ENCODE measurements at regions of chr1 and their contacts with region 1.

Region 1: DNA sequence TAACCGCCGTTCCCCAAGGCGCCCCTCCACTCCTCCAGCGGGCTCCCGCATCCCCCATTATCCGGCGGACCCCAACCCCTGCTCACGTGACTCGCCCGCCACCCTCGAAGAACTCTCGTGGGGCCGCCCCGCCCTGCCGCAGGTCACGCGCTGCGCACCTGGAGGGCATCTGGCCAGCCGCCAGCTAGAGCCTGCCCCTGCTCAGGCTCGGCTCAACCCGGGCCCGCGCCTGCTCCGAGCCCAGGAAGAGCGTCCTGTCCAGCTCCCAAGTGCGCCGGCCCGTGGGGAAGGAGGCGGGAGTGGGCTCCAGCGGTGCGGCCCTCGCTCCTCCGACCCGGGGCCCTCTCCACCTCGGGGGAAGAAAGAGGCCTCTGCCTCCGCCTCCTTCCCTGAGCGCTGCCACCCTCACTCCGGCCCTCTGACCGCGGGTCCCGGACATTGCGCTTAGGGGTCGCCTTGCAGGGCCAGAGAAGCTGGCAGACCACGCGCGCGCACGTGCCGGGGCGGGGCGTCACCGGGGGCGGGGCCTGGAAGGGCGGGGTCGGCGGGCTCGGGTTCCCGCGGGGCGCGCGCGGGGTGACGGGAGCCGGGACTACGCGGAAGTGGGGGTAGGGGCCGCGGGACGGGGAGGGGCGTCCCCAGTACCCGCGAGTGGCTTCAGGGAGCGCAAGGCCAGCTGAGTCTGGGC is 28.4 kb downstream of the HMGN2 start:
- DNase-seq: no peak
- H3K4me3 Mint-ChIP-seq: peak overlapping the region; percentile 87
- H3K27ac Mint-ChIP-seq: peak overlapping the region; percentile 93
- H3K4me1 Mint-ChIP-seq: peaks cover 28% of the 10 kb centered on the region
- H3K27me3 Mint-ChIP-seq: no peaks in the 10 kb centered on the region

Region 2: DNA sequence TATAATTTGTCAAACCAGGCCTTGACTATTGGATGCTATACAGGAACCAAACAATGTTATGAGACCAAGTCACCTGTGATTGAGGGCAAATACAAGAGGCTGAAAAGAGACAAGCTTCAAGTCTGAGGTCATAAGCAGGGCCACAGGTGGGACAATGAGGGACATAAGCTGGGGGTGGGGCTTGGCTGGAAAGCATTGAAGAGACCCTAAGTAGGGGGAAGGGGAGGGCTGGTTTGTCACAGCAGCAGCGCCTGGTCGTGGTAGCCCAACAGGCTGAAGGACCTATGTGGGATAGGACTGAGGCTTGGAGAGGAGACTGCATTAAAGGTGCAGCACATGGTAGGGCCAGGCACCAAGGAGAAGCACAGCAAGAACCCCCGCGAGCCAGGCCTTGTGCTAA is 10.5 kb before region 1 on chr1:
- CTCF ChIA-PET with region 1: interaction called, 19 read pairs
- POLR2A ChIA-PET with region 1: interaction called, 11 read pairs
- DNase-seq: no peak
- H3K4me3 Mint-ChIP-seq: no peak overlapping the region
- H3K27ac Mint-ChIP-seq: no peak overlapping the region
- H3K4me1 Mint-ChIP-seq: no peaks in the 10 kb centered on the region
- H3K27me3 Mint-ChIP-seq: no peaks in the 10 kb centered on the region

Region 3: GRCh38 chr1:26535201-26535600 is 34.6 kb after region 1 on chr1:
- CTCF ChIA-PET with region 1: interaction called, 89 read pairs
- POLR2A ChIA-PET with region 1: interaction called, 88 read pairs
- DNase-seq: no peak
- H3K4me3 Mint-ChIP-seq: peak overlapping the region; percentile 18
- H3K27ac Mint-ChIP-seq: peak overlapping the region; percentile 38
- H3K4me1 Mint-ChIP-seq: peaks cover 81% of the 10 kb centered on the region
- H3K27me3 Mint-ChIP-seq: no peaks in the 10 kb centered on the region

Region 4: GRCh38 chr1:26570287-26570686 is 69.7 kb after region 1 on chr1:
- CTCF ChIA-PET with region 1: interaction called, 6 read pairs
- POLR2A ChIA-PET with region 1: interaction called, 14 read pairs
- DNase-seq: no peak
- H3K4me3 Mint-ChIP-seq: no peak overlapping the region
- H3K27ac Mint-ChIP-seq: peak overlapping the region; percentile 32
- H3K4me1 Mint-ChIP-seq: peaks cover 17% of the 10 kb centered on the region
- H3K27me3 Mint-ChIP-seq: no peaks in the 10 kb centered on the region

Region 5: DNA sequence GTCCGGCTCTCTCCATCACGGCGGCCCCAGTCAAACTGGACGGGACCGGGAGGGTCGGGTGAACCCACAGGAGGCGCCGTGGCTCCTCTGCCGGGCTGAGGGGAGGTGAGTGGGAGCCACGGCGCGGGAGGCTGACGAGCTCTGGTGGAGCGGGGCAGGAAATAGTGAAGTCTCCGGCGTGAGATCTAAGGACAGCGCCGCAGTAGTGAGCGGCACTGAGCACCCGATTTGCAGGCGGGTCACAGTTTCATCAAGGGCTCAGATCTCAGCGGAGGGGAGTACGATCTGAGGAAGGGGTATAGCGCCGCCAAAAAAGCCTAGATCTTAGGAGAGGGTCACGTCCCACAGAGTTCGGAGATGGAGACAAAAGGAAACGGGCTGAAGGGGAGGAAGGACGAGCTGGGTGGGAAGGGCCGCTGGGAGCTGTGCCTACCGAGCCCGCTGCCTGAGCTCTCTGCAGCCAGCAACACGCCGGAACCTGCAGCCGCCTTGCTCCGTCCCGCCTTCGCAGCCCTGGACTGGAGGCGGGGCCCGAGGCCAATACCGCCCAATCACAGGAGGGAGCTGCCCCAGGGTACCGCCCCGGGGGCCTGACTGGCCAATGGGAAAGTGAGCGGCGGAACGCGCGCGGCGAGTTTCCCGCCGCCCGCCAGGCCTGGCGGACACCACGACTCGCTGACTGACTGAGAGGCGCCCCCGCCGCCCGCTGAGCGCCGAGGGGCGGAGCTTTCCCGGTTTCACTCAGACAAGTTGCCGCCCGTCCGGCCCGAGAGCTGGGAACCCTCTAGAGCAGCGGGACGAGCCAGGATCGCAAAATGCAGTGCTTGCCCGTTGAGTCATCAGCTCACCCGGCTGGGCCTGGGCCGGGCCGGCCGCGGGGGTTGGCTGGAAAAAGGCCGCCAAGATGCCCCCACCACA is 364.2 kb after region 1 on chr1:
- CTCF ChIA-PET with region 1: no interaction called
- POLR2A ChIA-PET with region 1: interaction called, 12 read pairs
- DNase-seq: peak; percentile 97
- H3K4me3 Mint-ChIP-seq: peak overlapping the region; percentile 90
- H3K27ac Mint-ChIP-seq: peak overlapping the region; percentile 93
- H3K4me1 Mint-ChIP-seq: peaks cover 37% of the 10 kb centered on the region
- H3K27me3 Mint-ChIP-seq: no peaks in the 10 kb centered on the region